ENCODE measurements at regions of chr5 and their contacts with region 1.

Region 1: DNA sequence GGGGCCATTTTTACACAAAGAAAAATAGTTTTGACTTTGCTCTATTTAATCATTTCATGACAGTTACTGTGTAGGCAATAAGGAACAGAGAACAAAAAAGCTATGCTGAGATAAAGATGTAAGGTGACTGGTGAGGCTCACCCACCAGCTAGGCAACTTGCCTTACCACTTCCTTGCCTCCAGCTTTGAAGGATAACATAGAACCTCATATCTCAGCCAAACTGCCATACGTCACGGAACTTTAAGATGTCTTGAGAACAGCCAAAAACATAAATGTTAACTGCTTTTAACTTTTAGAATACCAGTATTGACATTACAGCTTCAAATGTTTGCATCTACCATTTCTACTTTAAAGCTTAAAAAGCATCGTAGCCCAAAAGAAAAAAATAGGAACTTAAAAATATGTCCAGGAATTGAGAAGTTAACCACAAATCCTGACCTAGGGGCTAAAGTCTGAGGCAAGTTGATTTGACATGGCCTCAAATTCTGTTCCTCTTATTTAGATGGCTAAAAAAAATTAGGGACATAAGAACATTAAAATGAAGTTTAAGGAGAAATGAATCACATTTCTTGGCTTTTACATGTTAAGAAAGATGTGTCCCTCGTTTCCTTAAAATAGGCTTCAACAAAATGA is 7.7 kb upstream of the GCNT4 start:
- DNase-seq: peak in 13 of 14 experiments; percentile 24 to 88 (median 43)
- ATAC-seq: peak; percentile 92
- H3K4me3 ChIP-seq: no peak overlapping the region
- H3K4me3 Mint-ChIP-seq: peak overlapping the region; percentile 70
- H3K27ac ChIP-seq: peak overlapping the region; percentile 59 to 81
- H3K27ac Mint-ChIP-seq: peak overlapping the region; percentile 94
- H3K4me1 ChIP-seq: peaks cover 69% of the 10 kb centered on the region
- H3K4me1 Mint-ChIP-seq: peaks cover 73% of the 10 kb centered on the region
- H3K27me3 ChIP-seq: no peaks in the 10 kb centered on the region
- H3K27me3 Mint-ChIP-seq: no peaks in the 10 kb centered on the region
- CTCF ChIP-seq: no peak

Region 2: GRCh38 chr5:74943905-74944304 is 116.1 kb before region 1 on chr5:
- CTCF ChIA-PET with region 1: no interaction called
- POLR2A ChIA-PET with region 1: no interaction called
- intact Hi-C with region 1: no loop called
- DNase-seq: peak in 2 of 14 experiments; percentile 4 to 12
- ATAC-seq: no peak
- H3K4me3 ChIP-seq: no peak overlapping the region
- H3K4me3 Mint-ChIP-seq: no peak overlapping the region
- H3K27ac ChIP-seq: no peak overlapping the region
- H3K27ac Mint-ChIP-seq: no peak overlapping the region
- H3K4me1 ChIP-seq: no peaks in the 10 kb centered on the region
- H3K4me1 Mint-ChIP-seq: no peaks in the 10 kb centered on the region
- H3K27me3 ChIP-seq: no peaks in the 10 kb centered on the region
- H3K27me3 Mint-ChIP-seq: peaks cover 5% of the 10 kb centered on the region
- CTCF ChIP-seq: no peak

Region 3: DNA sequence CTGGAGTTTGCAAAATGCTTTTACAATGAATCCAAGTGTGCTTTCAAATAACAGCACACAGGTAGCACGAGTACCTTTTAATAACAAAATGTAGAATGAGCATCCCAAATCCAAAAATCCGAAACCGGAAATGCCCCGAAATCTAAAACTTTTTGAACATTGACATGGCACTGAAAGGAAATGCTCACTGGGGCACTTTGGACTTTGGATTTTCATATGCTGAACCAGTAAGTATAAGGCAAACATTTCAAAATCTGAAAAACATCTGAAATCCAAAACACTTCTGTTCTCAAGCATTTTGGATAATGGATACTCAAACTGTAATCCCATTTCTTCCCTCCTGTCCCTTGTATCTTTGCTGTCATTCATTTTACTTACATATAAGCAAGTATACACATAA is 57.8 kb before region 1 on chr5:
- CTCF ChIA-PET with region 1: no interaction called
- POLR2A ChIA-PET with region 1: no interaction called
- intact Hi-C with region 1: no loop called
- DNase-seq: no peak
- ATAC-seq: no peak
- H3K4me3 ChIP-seq: no peak overlapping the region
- H3K4me3 Mint-ChIP-seq: no peak overlapping the region
- H3K27ac ChIP-seq: no peak overlapping the region
- H3K27ac Mint-ChIP-seq: no peak overlapping the region
- H3K4me1 ChIP-seq: no peaks in the 10 kb centered on the region
- H3K4me1 Mint-ChIP-seq: no peaks in the 10 kb centered on the region
- H3K27me3 ChIP-seq: no peaks in the 10 kb centered on the region
- H3K27me3 Mint-ChIP-seq: no peaks in the 10 kb centered on the region
- CTCF ChIP-seq: no peak

Region 4: GRCh38 chr5:75078027-75078426 is 18.0 kb after region 1 on chr5:
- CTCF ChIA-PET with region 1: interaction called, 5 read pairs
- POLR2A ChIA-PET with region 1: interaction called, 15 read pairs
- intact Hi-C with region 1: loop called in 1 of 2 experiments (anchors 1 kb)
- DNase-seq: peak in 3 of 14 experiments; percentile 62 to 73 (median 65)
- ATAC-seq: peak; percentile 96
- H3K4me3 ChIP-seq: no peak overlapping the region
- H3K4me3 Mint-ChIP-seq: peak overlapping the region; percentile 35
- H3K27ac ChIP-seq: no peak overlapping the region
- H3K27ac Mint-ChIP-seq: no peak overlapping the region
- H3K4me1 ChIP-seq: peaks cover 10% of the 10 kb centered on the region
- H3K4me1 Mint-ChIP-seq: peaks cover 45% of the 10 kb centered on the region
- H3K27me3 ChIP-seq: no peaks in the 10 kb centered on the region
- H3K27me3 Mint-ChIP-seq: no peaks in the 10 kb centered on the region
- CTCF ChIP-seq: no peak

Region 5: DNA sequence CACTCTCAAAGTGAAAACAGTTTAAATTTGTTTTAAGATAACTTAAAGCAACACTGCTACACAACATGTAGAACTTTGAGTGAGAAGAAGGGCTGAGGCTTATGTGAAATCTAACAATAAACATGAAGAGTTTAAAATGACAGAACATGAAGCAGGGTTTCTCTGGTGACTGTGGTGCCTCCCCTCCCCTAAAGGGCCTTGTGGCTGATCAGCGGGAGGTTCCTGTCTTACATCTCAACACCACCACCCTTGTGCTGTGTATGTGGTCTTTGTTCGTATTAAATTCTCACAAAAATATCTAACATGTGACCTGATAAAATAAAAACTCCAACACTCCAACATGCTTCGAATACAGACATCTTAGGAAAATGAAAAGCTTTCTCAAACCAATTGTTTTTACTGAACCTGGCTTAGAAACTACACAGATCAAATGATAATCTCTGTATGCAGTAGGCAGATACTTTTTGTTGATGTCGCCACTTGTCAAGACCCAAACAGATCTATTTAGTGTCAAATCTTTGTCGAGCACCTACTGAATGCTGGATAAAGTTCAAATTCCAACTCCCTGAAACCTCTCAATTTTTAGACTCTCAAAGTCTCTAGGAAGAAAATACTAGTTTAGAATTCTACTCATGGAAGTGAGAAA is 1333.1 kb after region 1 on chr5:
- CTCF ChIA-PET with region 1: no interaction called
- POLR2A ChIA-PET with region 1: no interaction called
- intact Hi-C with region 1: loop called in 1 of 2 experiments (anchors 10 kb)
- DNase-seq: peak in 8 of 14 experiments; percentile 12 to 57 (median 34)
- ATAC-seq: peak; percentile 84
- H3K4me3 ChIP-seq: no peak overlapping the region
- H3K4me3 Mint-ChIP-seq: peak overlapping the region; percentile 54
- H3K27ac ChIP-seq: no peak overlapping the region
- H3K27ac Mint-ChIP-seq: peak overlapping the region; percentile 43
- H3K4me1 ChIP-seq: peaks cover 52% of the 10 kb centered on the region
- H3K4me1 Mint-ChIP-seq: peaks cover 73% of the 10 kb centered on the region
- H3K27me3 ChIP-seq: no peaks in the 10 kb centered on the region
- H3K27me3 Mint-ChIP-seq: no peaks in the 10 kb centered on the region
- CTCF ChIP-seq: no peak